ENCODE measurements at regions of chrX and their contacts with region 1.

Region 1: GRCh38 chrX:17242470-17242869 is 132.5 kb upstream of the NHS start:
- DNase-seq: no peak
- H3K4me3 ChIP-seq: no peak overlapping the region
- CTCF ChIP-seq: peak; percentile 33

Region 2: DNA sequence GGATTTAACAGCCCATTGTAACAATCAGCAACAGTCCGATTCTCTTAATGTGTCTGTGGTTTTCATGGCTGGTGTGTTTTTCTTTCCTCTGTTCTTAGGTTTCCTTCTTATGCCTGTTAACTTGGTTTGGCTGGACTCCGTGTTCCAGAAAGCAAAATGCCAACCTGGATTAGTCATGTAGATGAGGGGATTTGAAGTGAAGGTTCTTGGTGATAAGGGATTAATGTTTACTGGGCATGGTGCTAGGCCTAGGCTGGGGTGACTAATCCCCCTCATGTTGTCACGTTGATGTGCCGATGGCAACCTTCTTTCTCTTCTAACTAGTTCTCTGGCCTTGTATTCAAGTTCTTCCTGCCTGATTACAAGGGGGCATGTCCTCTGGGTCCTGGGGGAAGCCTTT is 210.1 kb before region 1 on chrX:
- CTCF ChIA-PET with region 1: no interaction called
- POLR2A ChIA-PET with region 1: no interaction called
- DNase-seq: no peak
- H3K4me3 ChIP-seq: no peak overlapping the region
- CTCF ChIP-seq: no peak

Region 3: GRCh38 chrX:17368002-17368401 is 125.5 kb after region 1 on chrX:
- CTCF ChIA-PET with region 1: no interaction called
- POLR2A ChIA-PET with region 1: no interaction called
- DNase-seq: no peak
- H3K4me3 ChIP-seq: no peak overlapping the region
- CTCF ChIP-seq: no peak

Region 4: GRCh38 chrX:17547658-17548057 is 305.2 kb after region 1 on chrX:
- CTCF ChIA-PET with region 1: no interaction called
- POLR2A ChIA-PET with region 1: no interaction called
- DNase-seq: no peak
- H3K4me3 ChIP-seq: no peak overlapping the region
- CTCF ChIP-seq: no peak

Region 5: DNA sequence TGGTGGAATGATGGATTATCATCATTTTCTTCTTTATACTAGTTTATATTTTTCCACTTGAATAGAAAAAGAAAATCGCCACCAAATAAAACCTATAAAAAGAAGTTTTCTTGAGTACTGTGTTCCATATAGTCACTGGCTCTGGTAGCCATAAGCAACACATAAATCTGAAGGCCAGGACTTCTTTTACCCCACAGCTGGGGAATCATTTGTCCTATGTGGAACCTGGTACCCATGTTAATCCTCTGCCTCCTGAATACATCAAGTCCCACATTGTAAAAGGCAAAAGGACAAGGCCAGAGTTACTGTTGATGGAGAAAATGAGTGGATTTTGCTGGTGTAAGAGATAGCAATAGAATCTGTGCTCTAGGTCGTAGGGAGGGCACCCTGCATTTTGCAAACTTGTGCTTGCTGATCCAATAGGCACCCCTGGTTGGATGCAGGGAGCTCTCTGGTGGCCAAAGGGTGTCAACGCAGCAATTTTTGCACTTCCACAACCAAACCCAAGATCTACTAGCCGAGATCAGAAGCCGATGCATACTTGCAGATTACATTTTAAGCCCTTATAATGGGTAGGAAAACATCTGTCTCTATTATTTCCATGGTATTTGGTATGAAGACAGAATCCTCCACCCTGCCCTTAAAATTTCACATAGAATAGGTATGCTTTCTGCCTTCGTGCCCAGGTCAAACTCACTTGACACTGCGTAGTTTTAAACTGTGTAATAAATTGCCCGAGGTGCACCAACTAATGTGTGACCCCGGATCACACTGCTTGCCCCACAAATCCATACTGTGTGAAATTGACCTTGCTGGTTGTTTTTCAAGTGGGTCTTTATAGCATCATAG is 348.6 kb after region 1 on chrX:
- CTCF ChIA-PET with region 1: interaction called, 22 read pairs
- POLR2A ChIA-PET with region 1: no interaction called
- DNase-seq: no peak
- H3K4me3 ChIP-seq: peak overlapping the region; percentile 40
- CTCF ChIP-seq: peak; percentile 73

Region 6: DNA sequence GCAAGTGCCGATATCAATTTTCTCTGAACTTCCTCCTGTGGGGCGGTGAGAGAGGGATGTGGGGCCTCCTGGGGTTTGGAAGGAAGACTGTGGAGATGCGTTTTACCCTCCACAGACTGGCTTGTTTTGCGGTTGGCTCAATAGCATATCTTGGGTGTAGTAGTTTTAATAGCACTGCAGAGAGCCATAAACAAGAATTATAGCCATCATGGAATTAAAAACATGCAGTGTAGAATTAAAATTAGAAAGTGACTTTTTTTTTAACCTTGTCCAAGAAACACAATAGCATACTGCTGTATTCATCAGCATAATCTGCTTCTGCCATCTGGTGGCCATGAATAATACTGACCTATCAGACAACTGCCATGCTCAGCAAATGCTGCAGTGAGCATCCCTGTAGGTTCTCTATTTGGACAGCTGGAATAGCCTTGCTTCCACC is 447.5 kb after region 1 on chrX:
- CTCF ChIA-PET with region 1: interaction called, 17 read pairs
- POLR2A ChIA-PET with region 1: no interaction called
- DNase-seq: peak; percentile 64
- H3K4me3 ChIP-seq: no peak overlapping the region
- CTCF ChIP-seq: peak; percentile 46